ENCODE measurements at regions of chr10 and their contacts with region 1.

Region 1: DNA sequence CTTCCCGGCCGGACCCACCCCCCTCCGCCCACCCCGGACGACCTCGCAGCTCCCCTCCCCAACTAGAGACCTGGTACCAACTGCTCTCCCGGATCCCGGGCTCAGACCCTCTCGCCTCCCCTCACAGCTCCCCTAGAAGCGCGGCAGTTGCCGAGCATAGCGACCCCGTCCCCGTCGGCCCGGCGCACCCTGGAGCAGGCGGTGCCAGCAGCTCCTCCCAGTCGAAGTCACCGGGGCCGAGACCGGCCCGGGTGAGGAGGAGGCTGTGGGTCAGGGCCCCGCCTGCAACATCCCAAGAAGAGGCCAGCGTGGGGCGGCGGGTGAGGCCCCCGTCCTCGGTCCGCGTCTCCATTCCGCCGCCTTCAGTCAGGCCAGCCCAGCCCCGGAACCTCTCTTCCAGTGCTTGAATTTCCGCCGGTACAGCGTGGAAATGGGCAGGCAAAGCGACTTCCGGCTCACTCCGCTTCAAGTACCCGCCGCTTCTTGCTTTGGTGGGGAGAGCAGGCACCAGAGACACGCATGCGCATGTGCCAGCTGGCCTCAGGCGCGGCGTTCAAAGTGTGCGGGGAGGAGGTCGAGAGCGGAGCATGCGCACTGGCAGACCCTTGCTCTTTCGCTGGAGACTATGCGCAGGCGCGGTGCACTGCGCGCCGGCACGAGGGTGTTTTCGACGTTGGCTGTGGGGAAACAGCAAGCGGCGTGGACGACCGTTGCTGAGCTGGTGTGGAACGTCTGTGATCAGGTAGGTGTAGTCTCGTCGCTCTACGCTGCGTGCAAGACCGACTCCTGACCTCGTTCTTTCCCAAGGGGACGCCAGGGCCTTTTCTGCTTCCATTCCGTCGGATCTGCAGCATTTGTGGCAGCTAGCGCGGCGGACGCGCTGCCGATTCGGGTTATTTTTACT is at the start of gene C10orf88:
- DNase-seq: peak; percentile 94 to 100 (median 97)
- ATAC-seq: peak; percentile 93
- H3K4me3 ChIP-seq: peak within 1 kb of the TSS; percentile 84
- H3K4me3 Mint-ChIP-seq: peak within 1 kb of the TSS; percentile 94
- H3K27ac ChIP-seq: no peak within 1 kb of the TSS
- H3K27ac Mint-ChIP-seq: peak within 1 kb of the TSS; percentile 82
- H3K4me1 ChIP-seq: peaks cover 23% of the 10 kb centered on the region
- H3K4me1 Mint-ChIP-seq: peaks cover 40% of the 10 kb centered on the region
- H3K27me3 ChIP-seq: no peaks in the 10 kb centered on the region
- H3K27me3 Mint-ChIP-seq: no peaks in the 10 kb centered on the region
- CTCF ChIP-seq: no peak
- total RNA-seq, gene C10orf88: 2.3 to 2.5 TPM

Region 2: DNA sequence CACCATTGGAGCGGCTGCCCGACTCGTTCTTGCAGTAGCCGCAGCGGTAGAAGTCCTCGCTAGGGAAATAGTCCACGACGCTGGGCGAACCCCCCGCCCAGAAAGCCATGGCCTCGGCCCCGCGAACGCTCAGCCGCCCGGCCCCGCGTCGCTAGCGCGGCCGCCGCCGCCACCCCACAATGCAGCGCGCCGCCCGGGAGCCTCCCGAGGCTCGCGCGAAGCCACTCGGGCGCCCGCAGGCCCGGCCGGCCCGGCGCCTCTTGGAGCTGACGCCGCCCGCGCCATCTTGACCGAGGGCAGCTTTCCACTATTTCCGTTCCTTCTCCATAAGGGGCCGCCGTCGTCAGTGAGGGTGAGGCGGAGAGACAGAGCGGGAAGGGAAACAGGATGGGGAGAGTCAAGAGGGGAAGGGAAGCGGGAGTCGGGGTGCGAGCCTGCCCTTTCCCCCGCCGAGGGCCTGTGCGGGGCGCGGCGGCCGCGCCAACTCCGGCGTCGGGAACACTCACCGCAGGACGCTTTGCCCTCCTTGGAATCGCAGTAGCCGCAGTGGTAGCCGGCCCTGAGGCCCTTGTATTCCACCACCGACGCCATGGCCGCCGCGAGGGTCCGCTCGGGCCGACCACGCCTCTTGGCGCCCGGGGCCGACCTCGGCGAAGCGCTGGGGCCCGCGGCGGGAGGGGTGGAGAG is 1026.1 kb before region 1 on chr10 and contains the start of gene ATE1:
- CTCF ChIA-PET with region 1: no interaction called
- POLR2A ChIA-PET with region 1: no interaction called
- intact Hi-C with region 1: loop called in 1 of 2 experiments (anchors 10 kb)
- DNase-seq: peak; percentile 67 to 92 (median 78)
- ATAC-seq: peak; percentile 93
- H3K4me3 ChIP-seq: peak within 1 kb of the TSS; percentile 99
- H3K4me3 Mint-ChIP-seq: peak within 1 kb of the TSS; percentile 96
- H3K27ac ChIP-seq: peak within 1 kb of the TSS; percentile 76 to 85
- H3K27ac Mint-ChIP-seq: peak within 1 kb of the TSS; percentile 92
- H3K4me1 ChIP-seq: peaks cover 11% of the 10 kb centered on the region
- H3K4me1 Mint-ChIP-seq: peaks cover 32% of the 10 kb centered on the region
- H3K27me3 ChIP-seq: no peaks in the 10 kb centered on the region
- H3K27me3 Mint-ChIP-seq: no peaks in the 10 kb centered on the region
- CTCF ChIP-seq: no peak
- total RNA-seq, gene ATE1: 18.5 to 20.9 TPM

Region 3: DNA sequence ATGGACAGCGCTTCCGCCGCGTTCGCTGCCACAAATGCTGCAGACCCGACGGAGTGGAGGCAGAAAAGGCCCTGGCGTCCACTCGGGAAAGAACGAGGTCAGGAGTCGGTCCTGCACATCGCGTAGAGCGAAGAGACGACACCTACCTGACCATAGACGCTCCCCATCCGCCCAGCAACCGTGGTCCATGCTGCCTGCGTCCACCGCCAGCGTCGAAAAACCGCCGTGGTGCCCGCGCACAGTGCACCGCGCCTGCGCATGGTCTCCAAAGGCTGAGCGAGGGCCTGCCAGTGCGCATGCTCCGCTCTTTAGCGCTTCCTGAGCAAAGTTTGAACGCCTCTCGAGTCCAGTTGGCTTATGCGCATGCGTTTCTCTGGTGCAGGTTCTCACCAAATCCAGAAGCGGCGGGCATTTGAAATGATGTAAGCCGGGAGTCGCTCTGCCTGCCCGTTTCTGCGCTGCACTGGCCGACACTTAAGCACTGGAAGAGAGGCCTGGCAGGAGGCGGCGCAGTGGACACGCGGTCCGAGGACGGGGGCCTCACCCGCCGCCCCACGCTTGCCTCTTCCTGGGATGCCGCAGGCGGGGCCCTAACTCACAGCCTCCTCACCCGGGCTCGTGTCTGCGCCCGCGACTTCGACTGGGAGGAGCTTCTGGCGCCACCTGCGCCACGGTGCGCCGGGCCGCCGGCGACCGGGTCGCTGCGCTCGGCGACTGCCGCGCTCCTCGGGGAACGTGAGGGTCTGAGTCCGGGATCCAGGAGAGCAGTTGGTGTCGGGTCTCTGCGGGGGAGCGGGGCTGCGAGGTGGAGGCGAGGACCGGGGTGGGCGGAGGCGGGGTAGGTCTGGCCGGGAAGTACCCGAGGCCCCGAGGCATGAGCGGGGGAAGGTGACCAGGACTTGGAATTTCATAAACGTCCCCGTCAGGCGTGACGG is 74.5 kb before region 1 on chr10 and contains the start of gene FAM24B:
- CTCF ChIA-PET with region 1: no interaction called
- POLR2A ChIA-PET with region 1: interaction called, 28 read pairs
- intact Hi-C with region 1: loop called (anchors 2 kb)
- DNase-seq: peak; percentile 87 to 98 (median 94)
- ATAC-seq: peak; percentile 84
- H3K4me3 ChIP-seq: peak within 1 kb of the TSS; percentile 80
- H3K4me3 Mint-ChIP-seq: peak within 1 kb of the TSS; percentile 86
- H3K27ac ChIP-seq: peak within 1 kb of the TSS; percentile 70 to 75
- H3K27ac Mint-ChIP-seq: peak within 1 kb of the TSS; percentile 79
- H3K4me1 ChIP-seq: peaks cover 19% of the 10 kb centered on the region
- H3K4me1 Mint-ChIP-seq: peaks cover 55% of the 10 kb centered on the region
- H3K27me3 ChIP-seq: no peaks in the 10 kb centered on the region
- H3K27me3 Mint-ChIP-seq: no peaks in the 10 kb centered on the region
- CTCF ChIP-seq: no peak
- total RNA-seq, gene FAM24B: 6.8 to 7.1 TPM

Region 4: DNA sequence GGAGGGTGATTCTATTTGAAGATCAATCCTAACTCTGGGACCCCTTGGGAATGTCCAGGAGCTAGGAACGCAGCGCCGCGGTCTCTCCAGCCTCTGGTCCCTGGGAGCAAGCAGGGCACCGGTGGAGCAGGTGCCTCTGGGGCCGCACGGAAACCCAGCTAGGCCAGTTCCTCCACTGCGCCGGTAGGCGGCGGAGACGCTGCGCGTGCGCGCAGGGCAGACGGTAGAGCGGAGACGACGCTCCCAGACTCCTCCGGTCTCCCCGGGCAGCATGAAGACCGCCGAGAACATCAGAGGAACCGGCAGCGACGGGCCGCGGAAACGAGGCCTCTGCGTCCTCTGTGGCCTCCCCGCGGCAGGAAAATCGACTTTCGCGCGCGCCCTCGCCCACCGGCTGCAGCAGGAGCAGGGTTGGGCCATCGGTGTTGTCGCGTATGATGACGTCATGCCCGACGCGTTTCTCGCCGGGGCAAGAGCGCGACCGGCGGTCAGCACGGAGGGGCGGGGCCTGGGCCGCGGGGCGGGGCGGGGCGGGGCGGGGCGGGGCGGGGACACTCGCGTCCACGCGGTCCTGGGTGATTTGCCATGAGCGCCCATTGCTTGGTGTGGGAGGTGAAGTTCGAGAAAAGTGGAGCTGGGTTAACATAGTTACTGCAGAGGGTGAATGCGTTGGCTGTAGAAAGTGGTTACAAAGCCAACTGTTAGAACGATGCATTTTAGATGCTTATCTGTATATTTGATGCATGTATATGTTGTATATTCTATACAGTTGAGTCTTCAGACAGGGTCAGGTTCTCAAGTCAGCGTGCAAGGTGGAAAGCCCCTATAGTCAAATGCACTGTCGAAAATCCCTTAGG is 26.4 kb after region 1 on chr10 and contains the start of gene PSTK:
- CTCF ChIA-PET with region 1: interaction called, 11 read pairs
- POLR2A ChIA-PET with region 1: interaction called, 15 read pairs
- intact Hi-C with region 1: loop called (anchors 1 to 2 kb)
- DNase-seq: peak; percentile 70 to 96 (median 82)
- ATAC-seq: peak; percentile 97
- H3K4me3 ChIP-seq: peak within 1 kb of the TSS; percentile 85
- H3K4me3 Mint-ChIP-seq: peak within 1 kb of the TSS; percentile 94
- H3K27ac ChIP-seq: peak within 1 kb of the TSS; percentile 81 to 96
- H3K27ac Mint-ChIP-seq: peak within 1 kb of the TSS; percentile 96
- H3K4me1 ChIP-seq: peaks cover 16% of the 10 kb centered on the region
- H3K4me1 Mint-ChIP-seq: peaks cover 18% of the 10 kb centered on the region
- H3K27me3 ChIP-seq: no peaks in the 10 kb centered on the region
- H3K27me3 Mint-ChIP-seq: no peaks in the 10 kb centered on the region
- CTCF ChIP-seq: peak; percentile 97
- total RNA-seq, gene PSTK: 16.1 to 18.6 TPM

Region 5: GRCh38 chr10:123236122-123236521 is 282.0 kb after region 1 on chr10:
- CTCF ChIA-PET with region 1: no interaction called
- POLR2A ChIA-PET with region 1: interaction called, 5 read pairs
- intact Hi-C with region 1: loop called in 1 of 2 experiments (anchors 10 kb)
- DNase-seq: no peak
- ATAC-seq: no peak
- H3K4me3 ChIP-seq: no peak overlapping the region
- H3K4me3 Mint-ChIP-seq: no peak overlapping the region
- H3K27ac ChIP-seq: no peak overlapping the region
- H3K27ac Mint-ChIP-seq: no peak overlapping the region
- H3K4me1 ChIP-seq: peaks cover 9% of the 10 kb centered on the region
- H3K4me1 Mint-ChIP-seq: peaks cover 14% of the 10 kb centered on the region
- H3K27me3 ChIP-seq: no peaks in the 10 kb centered on the region
- H3K27me3 Mint-ChIP-seq: no peaks in the 10 kb centered on the region
- CTCF ChIP-seq: no peak